ENCODE measurements at regions of chr1 and their contacts with region 1.

Region 1: DNA sequence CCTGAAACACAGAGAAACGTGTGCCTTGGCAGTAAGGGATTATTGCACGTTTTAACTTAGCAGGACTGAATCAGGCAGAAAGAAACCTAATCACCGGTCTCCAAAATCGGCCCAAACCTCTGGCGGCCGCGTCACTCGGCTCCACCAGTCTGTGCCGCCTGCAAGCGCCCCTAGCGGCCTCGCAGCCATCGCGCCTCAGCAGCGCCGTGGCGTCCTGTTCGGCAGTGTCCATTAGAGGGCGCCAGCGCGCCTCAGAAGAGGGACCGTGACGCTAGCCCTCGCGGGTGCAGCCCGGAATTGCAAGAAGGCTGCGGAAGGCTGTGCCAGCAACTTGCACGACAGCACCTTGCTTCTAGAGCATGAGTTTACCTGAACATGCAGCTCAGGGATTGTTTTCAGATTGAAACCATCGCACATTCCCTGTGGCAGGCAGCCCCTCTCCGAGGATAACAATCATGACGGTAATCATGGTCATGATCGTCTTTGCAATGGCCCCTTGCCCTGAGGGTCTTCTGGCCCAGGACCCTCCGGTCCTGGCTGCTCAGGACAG is 164.4 kb downstream of the TRIM33 start:
- DNase-seq: peak; percentile 84 to 88
- ATAC-seq: peak; percentile 91 to 97
- H3K4me3 ChIP-seq: peak overlapping the region; percentile 52 to 63 (median 61)
- H3K27ac ChIP-seq: peak overlapping the region; percentile 48 to 69 (median 55)
- H3K4me1 ChIP-seq: peaks cover 7 to 10% of the 10 kb centered on the region in 2 donors
- H3K27me3 ChIP-seq: no peaks in the 10 kb centered on the region
- CTCF ChIP-seq: peak; percentile 97 to 100 (median 100)
- POLR2A ChIP-seq: no peak

Region 2: GRCh38 chr1:114511032-114511785 is 164.7 kb after region 1 on chr1 and contains the start of gene TRIM33:
- in situ Hi-C with region 1: no loop called
- intact Hi-C with region 1: loop called (anchors 1 kb)
- DNase-seq: peak; percentile 81 to 91
- ATAC-seq: peak; percentile 86 to 87
- H3K4me3 ChIP-seq: peak within 1 kb of the TSS; percentile 69 to 100 (median 90)
- H3K27ac ChIP-seq: peak within 1 kb of the TSS; percentile 88 to 99 (median 96)
- H3K4me1 ChIP-seq: peaks cover 41 to 42% of the 10 kb centered on the region in 2 donors
- H3K27me3 ChIP-seq: no peaks in the 10 kb centered on the region
- CTCF ChIP-seq: peak in 1 of 5 experiments; percentile 18
- POLR2A ChIP-seq: peak; percentile 87 to 90
- total RNA-seq, gene TRIM33: 17.1 to 33.0 (median 25.3) TPM

Region 3: DNA sequence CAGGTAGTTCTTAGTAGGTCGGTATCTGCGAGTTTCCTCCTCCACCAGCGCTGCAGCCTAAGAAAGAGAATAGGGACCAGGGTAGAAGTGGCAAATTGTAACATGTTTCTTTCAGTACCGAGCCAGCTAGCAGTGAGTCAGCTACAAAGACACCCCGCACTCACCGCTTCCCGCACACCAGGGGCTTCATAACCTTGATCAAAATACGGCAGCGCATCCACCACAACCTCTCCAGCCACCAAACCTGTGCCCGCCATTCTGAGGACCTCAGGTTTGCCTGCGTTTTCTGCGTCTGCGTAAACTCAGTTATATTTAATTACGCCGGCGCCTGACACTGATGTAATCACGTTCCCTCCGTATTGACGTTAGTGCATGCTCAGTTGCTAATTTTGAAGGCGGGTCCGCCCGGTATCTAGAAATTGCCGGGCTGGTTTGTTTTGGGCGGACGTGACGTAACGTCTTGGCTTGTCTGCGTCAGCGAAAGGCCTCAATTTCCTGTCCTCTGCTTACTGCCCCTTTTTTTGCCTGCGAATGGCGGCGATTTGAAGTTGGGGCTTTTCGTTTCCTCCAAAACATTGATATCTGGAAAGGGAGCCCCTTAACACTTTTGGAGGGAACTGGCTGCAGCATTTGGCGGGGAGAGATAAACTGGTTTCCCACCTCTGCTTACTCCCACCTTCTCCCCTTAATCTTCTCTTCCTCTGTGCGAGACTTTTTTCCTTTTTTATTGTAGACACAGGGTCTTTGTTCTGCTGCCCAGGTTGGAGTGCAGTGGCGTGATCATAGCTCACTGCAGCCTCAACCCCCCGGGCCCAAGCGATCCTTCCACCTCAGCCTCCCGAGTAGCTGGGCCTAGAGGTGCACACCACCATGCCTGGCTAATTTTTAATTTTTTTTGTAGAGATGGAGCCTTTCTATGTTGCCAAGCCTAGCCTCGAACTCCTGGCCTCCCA is 235.1 kb after region 1 on chr1 and contains the start of gene BCAS2:
- in situ Hi-C with region 1: no loop called
- intact Hi-C with region 1: loop called (anchors 5 kb)
- DNase-seq: peak; percentile 95 to 97
- ATAC-seq: peak; percentile 99
- H3K4me3 ChIP-seq: peak within 1 kb of the TSS; percentile 64 to 75 (median 70)
- H3K27ac ChIP-seq: peak within 1 kb of the TSS; percentile 87 to 95 (median 92)
- H3K4me1 ChIP-seq: peaks cover 16 to 25% of the 10 kb centered on the region in 2 donors
- H3K27me3 ChIP-seq: no peaks in the 10 kb centered on the region
- CTCF ChIP-seq: no peak
- POLR2A ChIP-seq: peak; percentile 88 to 89
- total RNA-seq, gene BCAS2: 23.7 to 32.8 (median 25.2) TPM

Region 4: DNA sequence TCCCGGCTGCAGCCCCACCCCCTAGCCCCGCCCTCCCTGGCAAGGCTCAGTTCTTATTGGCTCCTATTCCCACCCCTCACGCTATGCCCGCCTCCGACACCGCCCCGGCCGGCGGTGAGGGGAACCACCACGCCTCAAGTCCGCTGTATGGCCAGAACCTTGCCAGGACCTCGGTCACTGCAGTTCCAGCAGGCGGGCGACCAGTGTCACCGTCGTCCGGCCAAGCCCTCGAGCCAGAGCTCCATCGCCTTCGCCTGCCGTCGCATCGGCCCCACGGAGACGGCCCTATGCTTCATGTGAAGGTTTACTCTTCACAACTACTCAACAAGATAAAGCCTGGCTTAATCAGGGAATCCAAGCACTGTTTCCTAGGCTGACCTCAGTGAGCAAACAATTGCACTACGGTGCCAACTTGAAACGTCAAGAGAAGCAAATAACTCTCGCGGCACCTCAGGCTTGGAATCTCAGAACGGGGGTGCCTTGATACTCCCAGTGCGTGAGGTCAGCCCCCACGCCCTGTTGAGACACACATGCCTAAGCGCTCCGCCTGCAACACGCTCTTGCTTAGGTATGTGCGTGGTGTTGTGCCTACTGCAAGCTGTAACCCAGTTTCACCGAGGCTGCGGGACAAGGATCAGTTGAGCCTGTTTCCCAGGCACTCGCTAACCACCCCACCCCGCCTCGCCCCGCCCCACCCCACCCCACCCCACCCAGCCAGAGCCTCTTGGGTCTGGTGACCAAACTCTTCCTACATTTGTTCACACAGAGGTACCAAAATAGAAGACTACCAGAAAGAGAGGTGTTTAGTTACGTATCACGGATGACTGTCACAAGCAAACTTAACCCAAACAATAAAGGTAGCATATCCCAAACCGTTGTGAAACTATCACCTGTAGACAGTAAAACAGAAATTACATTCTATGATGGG is 323.8 kb after region 1 on chr1:
- in situ Hi-C with region 1: no loop called
- intact Hi-C with region 1: loop called (anchors 2 kb)
- DNase-seq: peak; percentile 95 to 97
- ATAC-seq: peak; percentile 74 to 78
- H3K4me3 ChIP-seq: peak overlapping the region; percentile 65 to 93 (median 91)
- H3K27ac ChIP-seq: peak overlapping the region; percentile 89 to 100 (median 96)
- H3K4me1 ChIP-seq: peaks cover 15 to 40% of the 10 kb centered on the region in 2 donors
- H3K27me3 ChIP-seq: no peaks in the 10 kb centered on the region
- CTCF ChIP-seq: peak in 2 of 5 experiments; percentile 15 to 49
- POLR2A ChIP-seq: peak; percentile 86 to 95

Region 5: GRCh38 chr1:114780344-114781226 is 434.0 kb after region 1 on chr1 and contains the start of gene SIKE1:
- in situ Hi-C with region 1: no loop called
- intact Hi-C with region 1: loop called (anchors 5 kb)
- DNase-seq: peak; percentile 89 to 97
- ATAC-seq: peak; percentile 98 to 99
- H3K4me3 ChIP-seq: peak within 1 kb of the TSS; percentile 72 to 89 (median 86)
- H3K27ac ChIP-seq: peak within 1 kb of the TSS; percentile 92 to 97 (median 94)
- H3K4me1 ChIP-seq: peaks cover 21 to 25% of the 10 kb centered on the region in 2 donors
- H3K27me3 ChIP-seq: no peaks in the 10 kb centered on the region
- CTCF ChIP-seq: peak in 3 of 5 experiments; percentile 12 to 29 (median 20)
- POLR2A ChIP-seq: peak; percentile 90 to 93
- total RNA-seq, gene SIKE1: 25.7 to 37.8 (median 36.3) TPM